PC-9 (cell line): ENCODE measurements at regions of chr15 and their contacts with region 1.

Region 1: DNA sequence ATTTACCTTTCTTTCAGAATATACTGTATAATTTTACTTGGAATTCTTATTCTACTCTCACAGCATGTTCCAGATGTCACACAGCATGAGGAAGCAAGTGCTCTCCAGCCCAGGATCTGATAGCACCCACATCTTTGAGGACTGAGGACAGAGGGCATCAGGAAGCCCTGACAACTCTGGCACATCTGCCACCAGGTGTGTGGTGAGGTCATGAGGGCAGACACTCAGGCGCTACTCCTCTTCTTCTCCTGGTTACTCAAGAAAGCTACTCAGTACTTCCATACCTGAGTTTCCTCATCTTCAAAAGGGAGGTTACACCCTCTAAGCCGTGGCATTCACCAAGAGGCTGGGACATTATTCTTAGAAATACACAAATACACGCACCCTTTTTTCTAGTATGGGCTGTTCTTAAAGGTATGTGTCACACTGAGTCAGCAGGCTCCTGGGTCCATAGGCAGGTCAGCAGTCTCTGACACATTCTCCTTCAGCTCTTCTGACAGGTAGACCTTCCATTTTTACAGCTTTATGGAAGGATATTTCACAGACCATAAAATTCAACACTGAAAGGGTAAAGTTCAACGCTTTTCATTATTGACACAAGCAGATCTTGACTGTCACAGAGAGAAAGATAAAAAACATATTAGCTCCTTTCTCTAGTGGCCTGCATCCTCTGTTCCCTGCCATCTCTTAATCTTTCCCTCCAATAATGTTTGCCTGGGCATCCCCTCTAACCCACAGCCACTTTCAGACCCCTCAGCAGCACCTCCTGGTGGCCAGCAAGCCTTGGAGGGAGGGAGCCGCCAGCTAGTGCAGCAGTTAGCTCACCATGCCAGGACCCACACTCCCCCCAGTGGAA is 103.2 kb upstream of the TJP1 start:
- DNase-seq: peak; percentile 66 to 98
- H3K4me3 ChIP-seq: peak overlapping the region; percentile 28; the same call in 1 of the 2 replicates
- H3K27ac ChIP-seq: peak overlapping the region; percentile 97
- H3K4me1 ChIP-seq: peaks cover 66% of the 10 kb centered on the region
- H3K27me3 ChIP-seq: no peaks in the 10 kb centered on the region
- CTCF ChIP-seq: peak; percentile 73

Region 2: GRCh38 chr15:29668120-29668602 is 257.3 kb before region 1 on chr15:
- CTCF ChIA-PET with region 1: no interaction called
- POLR2A ChIA-PET with region 1: no interaction called
- intact Hi-C with region 1: loop called (anchors 2 kb)
- DNase-seq: peak; percentile 36 to 76
- H3K4me3 ChIP-seq: no peak overlapping the region
- H3K27ac ChIP-seq: no peak overlapping the region
- H3K4me1 ChIP-seq: 0 out of 2 replicates have a peak, but pooled peaks cover 5% of the 10 kb centered on the region
- H3K27me3 ChIP-seq: peaks cover 16% of the 10 kb centered on the region; the same call in 1 of the 2 replicates
- CTCF ChIP-seq: peak; percentile 71

Region 3: GRCh38 chr15:29747837-29748417 is 177.5 kb before region 1 on chr15:
- CTCF ChIA-PET with region 1: interaction called, 13 read pairs
- POLR2A ChIA-PET with region 1: no interaction called
- intact Hi-C with region 1: no loop called
- DNase-seq: no peak
- H3K4me3 ChIP-seq: no peak overlapping the region
- H3K27ac ChIP-seq: no peak overlapping the region
- H3K4me1 ChIP-seq: no peaks in the 10 kb centered on the region
- H3K27me3 ChIP-seq: no peaks in the 10 kb centered on the region
- CTCF ChIP-seq: peak; percentile 73

Region 4: DNA sequence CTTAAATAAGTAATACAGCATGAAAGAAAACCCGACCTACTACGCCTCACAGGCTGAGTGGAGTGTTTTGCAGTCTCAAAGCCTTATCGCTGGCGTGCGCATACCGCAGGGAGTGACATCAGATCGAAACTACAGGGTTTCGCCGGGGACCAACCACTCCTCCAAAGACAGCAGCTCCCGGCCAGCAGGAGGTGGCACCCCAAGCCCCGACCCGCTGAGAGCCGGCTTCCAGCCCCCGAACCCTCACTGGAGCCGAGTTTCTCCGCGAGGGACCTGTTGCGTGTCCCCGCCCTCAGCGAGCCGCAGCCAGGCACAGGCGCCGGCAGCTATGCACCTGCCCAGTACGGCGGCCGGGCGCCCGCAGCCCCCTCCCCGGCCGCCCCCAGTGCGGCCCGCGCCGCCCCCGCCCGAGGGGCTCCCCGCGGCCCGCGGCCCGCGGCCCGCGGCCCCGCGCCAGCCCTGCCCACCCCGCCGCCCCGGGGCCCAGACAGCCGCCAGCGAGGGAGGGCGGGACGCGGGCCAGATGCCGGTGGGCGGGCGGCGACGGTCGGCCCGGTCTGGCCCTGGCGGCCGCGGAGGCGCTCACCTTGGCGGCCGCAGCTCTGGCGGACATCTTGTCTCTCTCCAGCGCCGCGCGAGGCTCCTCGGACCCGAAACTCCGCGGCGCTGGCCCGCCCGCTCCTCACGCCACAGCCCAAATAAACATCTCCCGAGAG is 103.9 kb before region 1 on chr15:
- CTCF ChIA-PET with region 1: interaction called, 5 read pairs
- POLR2A ChIA-PET with region 1: interaction called, 9 read pairs
- intact Hi-C with region 1: loop called (anchors 1 kb)
- DNase-seq: peak; percentile 83 to 85
- H3K4me3 ChIP-seq: peak overlapping the region; percentile 74
- H3K27ac ChIP-seq: peak overlapping the region; percentile 95
- H3K4me1 ChIP-seq: peaks cover 26% of the 10 kb centered on the region
- H3K27me3 ChIP-seq: no peaks in the 10 kb centered on the region
- CTCF ChIP-seq: 0 out of 2 replicates have a peak, but pooled peaks have one; percentile 11

Region 5: GRCh38 chr15:30043211-30043655 is 117.8 kb after region 1 on chr15:
- CTCF ChIA-PET with region 1: no interaction called
- POLR2A ChIA-PET with region 1: no interaction called
- intact Hi-C with region 1: loop called (anchors 5 kb)
- DNase-seq: no peak
- H3K4me3 ChIP-seq: no peak overlapping the region
- H3K27ac ChIP-seq: no peak overlapping the region
- H3K4me1 ChIP-seq: no peaks in the 10 kb centered on the region
- H3K27me3 ChIP-seq: no peaks in the 10 kb centered on the region; the same call in 1 of the 2 replicates
- CTCF ChIP-seq: peak; percentile 42; the same call in 1 of the 2 replicates